ENCODE measurements at regions of chr17 and their contacts with region 1.

Region 1: GRCh38 chr17:27654654-27655524 is 23.9 kb downstream of the LGALS9 start:
- DNase-seq: peak; percentile 76
- ATAC-seq: peak; percentile 97
- H3K4me3 ChIP-seq: no peak overlapping the region
- H3K27ac ChIP-seq: peak overlapping the region; percentile 13; the same call in 1 of the 2 replicates
- H3K4me1 ChIP-seq: peaks cover 3 to 6% of the 10 kb centered on the region in 2 experiments; a peak in 2 of 4 replicates
- H3K27me3 ChIP-seq: no peaks in the 10 kb centered on the region
- CTCF ChIP-seq: peak; percentile 88 to 99 (median 99)
- POLR2A ChIP-seq: no peak
- RAD21 ChIP-seq: peak; percentile 78

Region 2: GRCh38 chr17:27236717-27237315 is 418.1 kb before region 1 on chr17:
- CTCF ChIA-PET with region 1: interaction called, 16 read pairs
- POLR2A ChIA-PET with region 1: no interaction called
- RAD21 ChIA-PET with region 1: interaction called in 1 of 2 experiments, 4 read pairs
- intact Hi-C with region 1: no loop called
- DNase-seq: peak; percentile 61
- ATAC-seq: peak; percentile 73
- H3K4me3 ChIP-seq: no peak overlapping the region
- H3K27ac ChIP-seq: no peak overlapping the region
- H3K4me1 ChIP-seq: peaks cover 9 to 11% of the 10 kb centered on the region in 2 experiments
- H3K27me3 ChIP-seq: no peaks in the 10 kb centered on the region
- CTCF ChIP-seq: peak; percentile 79 to 94 (median 84)
- POLR2A ChIP-seq: no peak
- RAD21 ChIP-seq: peak; percentile 83

Region 3: GRCh38 chr17:27353461-27354050 is 301.3 kb before region 1 on chr17:
- CTCF ChIA-PET with region 1: no interaction called
- POLR2A ChIA-PET with region 1: no interaction called
- RAD21 ChIA-PET with region 1: no interaction called
- intact Hi-C with region 1: loop called (anchors 5 kb)
- DNase-seq: peak; percentile 78
- ATAC-seq: peak; percentile 74
- H3K4me3 ChIP-seq: peak overlapping the region; percentile 85 to 95
- H3K27ac ChIP-seq: peak overlapping the region; percentile 93
- H3K4me1 ChIP-seq: peaks cover 24 to 48% of the 10 kb centered on the region in 2 experiments
- H3K27me3 ChIP-seq: no peaks in the 10 kb centered on the region
- CTCF ChIP-seq: peak; percentile 58 to 85 (median 73)
- POLR2A ChIP-seq: peak; percentile 43
- RAD21 ChIP-seq: peak; percentile 70

Region 4: GRCh38 chr17:27609611-27610303 is 45.1 kb before region 1 on chr17:
- CTCF ChIA-PET with region 1: interaction called, 9 read pairs
- POLR2A ChIA-PET with region 1: no interaction called
- RAD21 ChIA-PET with region 1: no interaction called
- intact Hi-C with region 1: loop called (anchors 1 kb)
- DNase-seq: no peak
- ATAC-seq: peak; percentile 91
- H3K4me3 ChIP-seq: no peak overlapping the region
- H3K27ac ChIP-seq: no peak overlapping the region
- H3K4me1 ChIP-seq: no peaks in the 10 kb centered on the region
- H3K27me3 ChIP-seq: no peaks in the 10 kb centered on the region
- CTCF ChIP-seq: peak; percentile 53 to 61 (median 60); a peak in 5 of 6 replicates
- POLR2A ChIP-seq: no peak
- RAD21 ChIP-seq: peak; percentile 65

Region 5: DNA sequence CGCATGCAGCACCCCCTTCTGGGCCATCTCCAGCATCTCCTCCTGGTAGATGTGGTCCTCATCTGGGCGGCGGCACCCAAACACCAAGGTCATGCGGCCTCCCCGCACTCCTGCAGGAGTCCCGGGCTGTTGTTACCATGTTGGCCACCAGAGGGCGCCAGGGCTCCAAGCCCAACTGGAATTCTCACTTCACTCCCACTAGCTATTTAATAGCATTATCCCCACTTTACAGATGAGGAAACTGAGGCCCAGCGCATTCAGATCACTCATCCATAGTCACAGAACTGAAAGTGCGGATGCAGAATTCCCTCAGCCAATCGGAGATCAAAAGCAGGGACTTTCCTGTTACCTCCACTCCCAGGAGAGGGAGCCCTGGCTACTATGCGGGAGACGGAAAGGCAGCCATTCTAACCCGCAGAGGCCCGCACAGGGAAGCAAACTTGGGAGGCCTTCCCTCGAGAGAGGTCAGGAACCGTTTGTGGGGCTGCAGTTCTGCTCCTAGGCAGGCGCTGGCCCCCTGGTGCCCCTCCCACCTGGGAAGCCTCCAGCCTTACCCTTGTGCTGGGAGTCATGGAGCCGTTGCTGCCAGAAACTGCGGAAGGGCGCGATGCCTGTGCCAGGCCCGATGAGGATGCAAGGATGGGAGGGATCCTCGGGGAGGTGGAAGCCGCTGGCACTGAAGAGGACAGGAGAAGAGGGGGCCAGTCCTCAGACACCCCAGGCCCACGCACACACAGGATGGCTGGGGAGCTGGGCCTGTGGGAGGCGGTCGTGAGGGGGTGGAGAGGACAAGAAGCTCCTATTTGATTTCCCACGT is 105.4 kb after region 1 on chr17:
- CTCF ChIA-PET with region 1: interaction called, 76 read pairs
- POLR2A ChIA-PET with region 1: interaction called, 4 read pairs
- RAD21 ChIA-PET with region 1: interaction called, 9 to 11 read pairs
- intact Hi-C with region 1: loop called (anchors 1 kb)
- DNase-seq: peak; percentile 24
- ATAC-seq: peak; percentile 86
- H3K4me3 ChIP-seq: no peak overlapping the region
- H3K27ac ChIP-seq: no peak overlapping the region
- H3K4me1 ChIP-seq: no peaks in the 10 kb centered on the region
- H3K27me3 ChIP-seq: no peaks in the 10 kb centered on the region; the same call in none of the 2 replicates
- CTCF ChIP-seq: peak; percentile 92 to 94 (median 93)
- POLR2A ChIP-seq: no peak
- RAD21 ChIP-seq: peak; percentile 77